Naive thymus-derived CD4-positive, alpha-beta T cell (primary cell): ENCODE measurements at regions of chr6 and their contacts with region 1.

Region 1: GRCh38 chr6:159104163-159104925 is 59.6 kb upstream of the TAGAP start:
- DNase-seq: peak; percentile 68 to 81 (median 77)
- ATAC-seq: peak; percentile 79
- H3K4me3 ChIP-seq: peak overlapping the region; percentile 5
- H3K4me3 Mint-ChIP-seq: peak overlapping the region in 9 of 10 donors; percentile 40 to 69 (median 54)
- H3K27ac ChIP-seq: peak overlapping the region; percentile 79
- H3K27ac Mint-ChIP-seq: peak overlapping the region; percentile 82 to 98 (median 91)
- H3K4me1 ChIP-seq: peaks cover 58 to 73% of the 10 kb centered on the region in 2 donors
- H3K4me1 Mint-ChIP-seq: peaks cover 58 to 96% (median 86%) of the 10 kb centered on the region in 7 donors
- H3K27me3 ChIP-seq: no peaks in the 10 kb centered on the region
- H3K27me3 Mint-ChIP-seq: no peaks in the 10 kb centered on the region

Region 2: GRCh38 chr6:158605266-158605878 is 499.0 kb before region 1 on chr6:
- CTCF ChIA-PET with region 1: no interaction called
- POLR2A ChIA-PET with region 1: no interaction called
- intact Hi-C with region 1: no loop called
- DNase-seq: peak in 8 of 9 donors; percentile 31 to 57 (median 44)
- ATAC-seq: peak; percentile 85
- H3K4me3 ChIP-seq: no peak overlapping the region
- H3K4me3 Mint-ChIP-seq: no peak overlapping the region
- H3K27ac ChIP-seq: no peak overlapping the region
- H3K27ac Mint-ChIP-seq: peak overlapping the region in 8 of 9 donors; percentile 5 to 83 (median 66)
- H3K4me1 ChIP-seq: no peaks in the 10 kb centered on the region
- H3K4me1 Mint-ChIP-seq: peaks cover 0 to 19% (median 7%) of the 10 kb centered on the region in 7 donors
- H3K27me3 ChIP-seq: no peaks in the 10 kb centered on the region
- H3K27me3 Mint-ChIP-seq: no peaks in the 10 kb centered on the region

Region 3: GRCh38 chr6:158704181-158704822 is 400.0 kb before region 1 on chr6:
- CTCF ChIA-PET with region 1: interaction called, 5 read pairs
- POLR2A ChIA-PET with region 1: no interaction called
- intact Hi-C with region 1: loop called in 1 of 2 experiments (anchors 10 kb)
- DNase-seq: peak; percentile 55 to 85 (median 74)
- ATAC-seq: peak; percentile 98
- H3K4me3 ChIP-seq: peak overlapping the region; percentile 60
- H3K4me3 Mint-ChIP-seq: peak overlapping the region; percentile 73 to 90 (median 84)
- H3K27ac ChIP-seq: peak overlapping the region; percentile 35
- H3K27ac Mint-ChIP-seq: peak overlapping the region in 8 of 9 donors; percentile 14 to 84 (median 64)
- H3K4me1 ChIP-seq: peaks cover 8 to 9% of the 10 kb centered on the region in 2 donors
- H3K4me1 Mint-ChIP-seq: peaks cover 7 to 27% (median 15%) of the 10 kb centered on the region in 7 donors
- H3K27me3 ChIP-seq: no peaks in the 10 kb centered on the region
- H3K27me3 Mint-ChIP-seq: no peaks in the 10 kb centered on the region

Region 4: GRCh38 chr6:158819213-158819909 is 285.0 kb before region 1 on chr6 and contains the start of gene EZR:
- CTCF ChIA-PET with region 1: no interaction called
- POLR2A ChIA-PET with region 1: interaction called, 3 read pairs
- intact Hi-C with region 1: loop called in 1 of 2 experiments (anchors 2 kb)
- DNase-seq: peak; percentile 70 to 85 (median 80)
- ATAC-seq: peak; percentile 80
- H3K4me3 ChIP-seq: peak within 1 kb of the TSS; percentile 50
- H3K4me3 Mint-ChIP-seq: peak within 1 kb of the TSS; percentile 81 to 97 (median 90)
- H3K27ac ChIP-seq: peak within 1 kb of the TSS; percentile 99
- H3K27ac Mint-ChIP-seq: peak within 1 kb of the TSS; percentile 89 to 97 (median 91)
- H3K4me1 ChIP-seq: peaks cover 21 to 24% of the 10 kb centered on the region in 2 donors
- H3K4me1 Mint-ChIP-seq: peaks cover 30 to 47% (median 36%) of the 10 kb centered on the region in 7 donors
- H3K27me3 ChIP-seq: no peaks in the 10 kb centered on the region
- H3K27me3 Mint-ChIP-seq: no peaks in the 10 kb centered on the region
- total RNA-seq, gene EZR: 132 to 201 (median 163) TPM

Region 5: GRCh38 chr6:158999666-159000403 is 104.5 kb before region 1 on chr6 and contains the start of gene RSPH3:
- CTCF ChIA-PET with region 1: interaction called, 220 read pairs
- POLR2A ChIA-PET with region 1: interaction called, 11 read pairs
- intact Hi-C with region 1: no loop called
- DNase-seq: peak; percentile 64 to 93 (median 81)
- ATAC-seq: peak; percentile 93
- H3K4me3 ChIP-seq: peak within 1 kb of the TSS; percentile 97
- H3K4me3 Mint-ChIP-seq: peak within 1 kb of the TSS; percentile 88 to 99 (median 98)
- H3K27ac ChIP-seq: peak within 1 kb of the TSS; percentile 76
- H3K27ac Mint-ChIP-seq: peak within 1 kb of the TSS; percentile 58 to 95 (median 90)
- H3K4me1 ChIP-seq: peaks cover 7 to 16% of the 10 kb centered on the region in 2 donors
- H3K4me1 Mint-ChIP-seq: peaks cover 16 to 35% (median 26%) of the 10 kb centered on the region in 7 donors
- H3K27me3 ChIP-seq: no peaks in the 10 kb centered on the region
- H3K27me3 Mint-ChIP-seq: no peaks in the 10 kb centered on the region
- total RNA-seq, gene RSPH3: 1.3 to 3.6 (median 2.7) TPM

Region 6: GRCh38 chr6:159017757-159018559 is 86.4 kb before region 1 on chr6:
- CTCF ChIA-PET with region 1: interaction called, 17 read pairs
- POLR2A ChIA-PET with region 1: interaction called, 12 read pairs
- intact Hi-C with region 1: no loop called
- DNase-seq: no peak
- ATAC-seq: no peak
- H3K4me3 ChIP-seq: no peak overlapping the region
- H3K4me3 Mint-ChIP-seq: peak overlapping the region in 9 of 10 donors; percentile 11 to 70 (median 53)
- H3K27ac ChIP-seq: peak overlapping the region; percentile 52
- H3K27ac Mint-ChIP-seq: peak overlapping the region; percentile 28 to 92 (median 69)
- H3K4me1 ChIP-seq: peaks cover 30 to 46% of the 10 kb centered on the region in 2 donors
- H3K4me1 Mint-ChIP-seq: peaks cover 16 to 50% (median 46%) of the 10 kb centered on the region in 7 donors
- H3K27me3 ChIP-seq: no peaks in the 10 kb centered on the region
- H3K27me3 Mint-ChIP-seq: no peaks in the 10 kb centered on the region

Region 7: GRCh38 chr6:159134701-159135364 is 30.5 kb after region 1 on chr6:
- CTCF ChIA-PET with region 1: interaction called, 35 read pairs
- POLR2A ChIA-PET with region 1: interaction called, 6 read pairs
- intact Hi-C with region 1: loop called (anchors 1 kb)
- DNase-seq: peak; percentile 46 to 77 (median 68)
- ATAC-seq: peak; percentile 96
- H3K4me3 ChIP-seq: no peak overlapping the region
- H3K4me3 Mint-ChIP-seq: no peak overlapping the region
- H3K27ac ChIP-seq: no peak overlapping the region
- H3K27ac Mint-ChIP-seq: no peak overlapping the region
- H3K4me1 ChIP-seq: no peaks in the 10 kb centered on the region
- H3K4me1 Mint-ChIP-seq: peaks cover 0 to 9% (median 0%) of the 10 kb centered on the region in 7 donors
- H3K27me3 ChIP-seq: no peaks in the 10 kb centered on the region
- H3K27me3 Mint-ChIP-seq: peaks cover 0 to 42% (median 7%) of the 10 kb centered on the region in 5 donors

Region 8: GRCh38 chr6:159298840-159299239 is 194.5 kb after region 1 on chr6:
- CTCF ChIA-PET with region 1: no interaction called
- POLR2A ChIA-PET with region 1: no interaction called
- intact Hi-C with region 1: no loop called
- DNase-seq: no peak
- ATAC-seq: no peak
- H3K4me3 ChIP-seq: no peak overlapping the region
- H3K4me3 Mint-ChIP-seq: no peak overlapping the region
- H3K27ac ChIP-seq: no peak overlapping the region
- H3K27ac Mint-ChIP-seq: no peak overlapping the region
- H3K4me1 ChIP-seq: no peaks in the 10 kb centered on the region
- H3K4me1 Mint-ChIP-seq: no peaks in the 10 kb centered on the region
- H3K27me3 ChIP-seq: no peaks in the 10 kb centered on the region
- H3K27me3 Mint-ChIP-seq: peaks cover 14 to 52% (median 46%) of the 10 kb centered on the region in 5 donors